ENCODE measurements at regions of chr19 and their contacts with region 1.

Region 1: GRCh38 chr19:11924886-11925650 is at the start of gene ZNF700:
- DNase-seq: peak; percentile 95
- H3K4me3 ChIP-seq: peak within 1 kb of the TSS; percentile 84
- H3K27ac ChIP-seq: peak within 1 kb of the TSS; percentile 93
- H3K4me1 ChIP-seq: peaks cover 36% of the 10 kb centered on the region
- H3K27me3 ChIP-seq: no peaks in the 10 kb centered on the region
- CTCF ChIP-seq: no peak
- total RNA-seq, gene ZNF700: 3.3 TPM

Region 2: DNA sequence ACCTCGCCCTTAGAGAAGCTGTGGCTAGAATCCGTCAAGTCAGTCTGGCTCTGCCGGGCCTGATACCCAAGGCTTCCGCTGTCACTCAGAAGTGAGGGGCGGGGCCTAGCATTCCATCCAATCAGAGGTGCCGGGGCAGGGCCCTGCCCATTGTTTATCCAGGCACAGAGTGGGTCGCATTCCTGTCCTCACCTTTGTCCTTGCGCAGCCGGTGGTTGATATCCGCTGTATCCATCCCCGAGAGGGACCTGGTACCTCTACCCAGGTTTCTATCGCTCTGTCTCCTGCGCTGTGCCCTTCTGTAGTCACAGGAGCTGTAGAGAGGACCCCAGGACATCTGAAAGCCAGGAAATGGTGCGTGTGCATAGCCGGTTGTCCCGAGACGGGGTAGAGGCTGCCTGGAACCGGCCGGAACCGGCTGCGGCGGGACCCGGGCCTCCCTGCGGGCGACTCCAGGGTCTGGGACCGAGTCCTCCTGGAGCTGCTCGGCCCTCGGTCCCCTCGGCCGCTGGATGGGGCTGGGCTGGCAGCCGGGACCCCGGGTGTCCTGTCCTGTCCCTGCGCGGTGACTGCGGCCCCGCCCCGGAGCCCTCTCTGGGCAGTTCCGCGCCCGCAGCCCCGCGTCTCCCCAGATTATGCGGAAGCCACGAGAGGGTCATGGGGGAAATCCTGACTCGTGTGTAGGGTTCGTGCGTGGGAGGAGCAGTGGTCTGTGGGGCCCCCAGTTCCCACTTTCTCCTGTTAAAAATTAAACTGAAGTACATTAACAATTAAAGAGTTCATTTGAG is 40.0 kb after region 1 on chr19 and contains the start of gene ZNF763:
- intact Hi-C with region 1: no loop called
- DNase-seq: peak; percentile 95
- H3K4me3 ChIP-seq: peak within 1 kb of the TSS; percentile 82
- H3K27ac ChIP-seq: peak within 1 kb of the TSS; percentile 94
- H3K4me1 ChIP-seq: peaks cover 21% of the 10 kb centered on the region
- H3K27me3 ChIP-seq: no peaks in the 10 kb centered on the region
- CTCF ChIP-seq: no peak
- total RNA-seq, gene ZNF763: 3.1 TPM

Region 3: DNA sequence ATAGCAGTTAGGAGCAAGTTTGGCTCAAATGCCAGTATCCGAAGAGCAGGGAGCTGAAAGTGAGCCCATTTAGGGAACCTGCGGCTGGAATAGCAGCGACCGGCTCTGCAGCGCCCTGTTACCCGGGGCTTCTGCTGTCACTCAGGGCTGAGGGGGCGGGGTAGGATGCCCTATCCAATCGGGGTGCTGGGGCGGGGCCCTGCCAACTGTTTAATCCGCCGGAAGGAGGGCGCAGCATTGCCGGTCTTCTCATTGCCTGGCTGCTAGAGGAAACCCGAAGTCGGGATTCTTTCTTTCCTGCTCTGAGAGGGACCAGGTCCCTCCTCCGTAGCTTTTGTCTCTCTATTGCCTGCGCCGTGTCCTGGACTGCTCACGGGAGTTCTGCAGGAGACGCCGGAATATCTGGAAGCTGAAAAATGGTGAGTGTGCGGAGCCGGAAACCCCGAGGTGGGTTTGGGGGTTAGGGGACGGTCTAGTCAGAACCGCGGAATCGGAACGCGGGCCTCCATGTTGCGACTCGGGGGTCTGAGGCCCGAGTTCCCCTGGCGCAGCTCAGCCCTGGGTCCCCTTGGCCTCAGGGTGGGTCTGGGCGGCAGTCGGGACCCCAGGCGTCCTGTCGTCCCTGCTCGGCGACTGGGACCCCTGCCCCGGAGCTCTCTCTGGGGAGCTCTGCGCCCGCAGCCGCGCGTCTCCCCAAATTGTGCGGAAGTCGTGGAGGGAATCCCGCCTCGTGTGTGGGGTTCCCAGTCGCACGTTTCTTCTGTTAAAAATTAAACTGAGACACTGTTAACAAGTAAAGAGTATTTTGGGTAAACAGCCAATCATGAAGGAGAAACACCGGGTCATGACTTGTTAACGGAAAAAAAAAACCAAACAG is 62.6 kb after region 1 on chr19:
- intact Hi-C with region 1: loop called (anchors 10 kb)
- DNase-seq: peak; percentile 97
- H3K4me3 ChIP-seq: peak overlapping the region; percentile 83
- H3K27ac ChIP-seq: peak overlapping the region; percentile 83
- H3K4me1 ChIP-seq: peaks cover 28% of the 10 kb centered on the region
- H3K27me3 ChIP-seq: no peaks in the 10 kb centered on the region
- CTCF ChIP-seq: no peak

Measured in left ventricle myocardium inferior (tissue), 1 donor.